Calu3 (cell line): ENCODE measurements at regions of chr18 and their contacts with region 1.

Region 1: DNA sequence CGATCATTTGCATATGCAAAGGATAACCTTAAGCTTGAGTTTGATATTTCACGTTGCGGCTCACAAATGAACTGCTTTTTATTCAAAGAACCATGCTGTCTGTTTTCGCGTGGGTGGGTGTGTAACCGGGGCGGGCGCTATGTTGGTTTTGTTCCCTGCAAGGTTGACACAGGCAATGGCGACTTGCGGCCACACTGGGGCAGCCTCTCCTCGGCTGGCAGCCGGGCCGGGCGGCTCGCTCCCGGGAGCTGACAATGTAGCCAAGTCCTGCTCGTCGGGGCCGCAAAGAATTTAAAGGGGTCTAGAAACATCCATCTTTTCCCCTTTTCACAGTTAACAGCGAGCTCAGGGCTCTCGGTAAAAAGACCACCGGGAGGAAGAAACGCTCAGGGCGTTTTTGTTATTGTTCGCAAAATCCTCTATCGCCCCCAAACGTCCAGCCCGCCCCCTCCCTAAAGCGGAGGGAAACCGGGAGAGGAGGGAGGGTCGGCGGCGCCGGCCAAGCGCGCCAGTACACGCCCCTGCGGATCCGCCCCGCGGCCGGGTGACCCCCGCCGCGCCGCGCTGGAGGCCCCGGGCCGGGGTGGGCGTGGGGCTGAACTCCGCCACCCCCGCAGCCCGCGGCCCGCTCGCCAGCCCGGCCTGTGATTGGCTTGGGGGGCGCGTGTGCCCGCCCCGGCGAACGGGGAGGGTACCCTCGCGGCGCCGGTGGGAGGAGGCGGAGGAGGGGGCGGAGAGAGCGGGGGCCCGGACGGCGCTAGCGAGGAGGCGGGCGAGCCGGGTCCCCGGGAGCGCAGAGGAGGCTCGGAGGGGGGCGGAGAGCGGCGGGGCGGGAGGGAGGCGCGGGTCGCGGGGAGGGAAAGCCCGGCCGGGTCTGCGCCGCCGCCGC is at the start of gene NEDD4L:
- DNase-seq: peak; percentile 93
- H3K4me3 Mint-ChIP-seq: peak within 1 kb of the TSS; percentile 99
- H3K27ac Mint-ChIP-seq: peak within 1 kb of the TSS; percentile 93
- H3K4me1 Mint-ChIP-seq: peaks cover 50% of the 10 kb centered on the region
- H3K27me3 Mint-ChIP-seq: no peaks in the 10 kb centered on the region
- CTCF ChIP-seq: peak; percentile 79
- total RNA-seq, gene NEDD4L: 213 TPM in 2 replicates

Region 2: GRCh38 chr18:57881818-57882413 is 161.8 kb before region 1 on chr18:
- CTCF ChIA-PET with region 1: interaction called, 13 read pairs
- intact Hi-C with region 1: loop called (anchors 1 kb)
- DNase-seq: peak; percentile 78
- H3K4me3 Mint-ChIP-seq: no peak overlapping the region
- H3K27ac Mint-ChIP-seq: peak overlapping the region; percentile 37
- H3K4me1 Mint-ChIP-seq: peaks cover 31% of the 10 kb centered on the region
- H3K27me3 Mint-ChIP-seq: no peaks in the 10 kb centered on the region
- CTCF ChIP-seq: peak; percentile 85

Region 3: GRCh38 chr18:57895182-57895581 is 148.6 kb before region 1 on chr18:
- CTCF ChIA-PET with region 1: no interaction called
- intact Hi-C with region 1: no loop called
- DNase-seq: no peak
- H3K4me3 Mint-ChIP-seq: no peak overlapping the region
- H3K27ac Mint-ChIP-seq: no peak overlapping the region
- H3K4me1 Mint-ChIP-seq: peaks cover 46% of the 10 kb centered on the region
- H3K27me3 Mint-ChIP-seq: no peaks in the 10 kb centered on the region
- CTCF ChIP-seq: no peak

Region 4: DNA sequence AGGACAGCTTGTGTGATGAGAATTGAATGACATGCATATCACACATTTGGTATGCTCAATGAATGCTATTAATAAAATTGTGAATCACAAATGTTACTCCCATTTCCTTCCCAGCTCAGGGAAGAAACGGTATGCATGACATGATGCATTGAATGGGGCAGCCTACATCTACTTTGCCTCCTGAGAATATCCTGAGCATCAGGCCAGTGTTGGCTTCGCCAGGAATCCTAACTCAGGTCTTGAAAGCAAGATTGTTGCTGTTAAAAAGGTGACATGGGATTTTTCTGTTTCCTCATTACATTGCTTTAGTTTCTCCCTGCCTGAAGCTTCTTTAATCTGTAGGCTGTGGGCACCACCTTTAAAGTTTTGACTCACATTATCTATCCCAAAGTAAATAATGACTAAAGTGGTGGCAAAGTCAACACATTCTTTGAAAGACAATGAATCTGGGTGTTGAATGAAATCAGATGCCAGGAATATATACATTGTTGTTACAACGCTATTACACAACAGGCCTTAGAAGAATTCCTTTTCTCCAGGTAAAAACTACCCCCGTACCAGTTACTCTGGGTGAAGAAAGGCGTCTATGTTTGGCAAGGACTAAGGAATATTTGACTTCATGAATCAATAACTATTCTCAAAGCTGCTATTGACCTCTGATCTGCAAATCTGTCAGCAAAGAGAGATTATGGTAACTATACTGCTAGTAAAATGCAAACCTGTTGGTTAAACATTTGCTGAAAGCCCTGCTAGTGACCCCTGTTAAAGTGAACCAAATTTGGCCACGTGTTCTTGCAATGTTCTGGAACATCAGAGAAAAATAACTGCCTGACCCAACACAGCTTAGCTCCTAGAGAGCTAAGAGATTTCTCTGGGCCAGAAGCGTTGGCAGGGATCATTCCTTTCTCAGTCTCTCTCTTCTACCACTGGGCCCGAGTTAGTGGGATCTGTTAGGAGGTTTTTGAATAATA is 30.2 kb before region 1 on chr18:
- CTCF ChIA-PET with region 1: interaction called, 9 read pairs
- intact Hi-C with region 1: loop called (anchors 1 kb)
- DNase-seq: peak; percentile 49
- H3K4me3 Mint-ChIP-seq: no peak overlapping the region
- H3K27ac Mint-ChIP-seq: peak overlapping the region; percentile 92
- H3K4me1 Mint-ChIP-seq: peaks cover 64% of the 10 kb centered on the region
- H3K27me3 Mint-ChIP-seq: no peaks in the 10 kb centered on the region
- CTCF ChIP-seq: no peak

Region 5: DNA sequence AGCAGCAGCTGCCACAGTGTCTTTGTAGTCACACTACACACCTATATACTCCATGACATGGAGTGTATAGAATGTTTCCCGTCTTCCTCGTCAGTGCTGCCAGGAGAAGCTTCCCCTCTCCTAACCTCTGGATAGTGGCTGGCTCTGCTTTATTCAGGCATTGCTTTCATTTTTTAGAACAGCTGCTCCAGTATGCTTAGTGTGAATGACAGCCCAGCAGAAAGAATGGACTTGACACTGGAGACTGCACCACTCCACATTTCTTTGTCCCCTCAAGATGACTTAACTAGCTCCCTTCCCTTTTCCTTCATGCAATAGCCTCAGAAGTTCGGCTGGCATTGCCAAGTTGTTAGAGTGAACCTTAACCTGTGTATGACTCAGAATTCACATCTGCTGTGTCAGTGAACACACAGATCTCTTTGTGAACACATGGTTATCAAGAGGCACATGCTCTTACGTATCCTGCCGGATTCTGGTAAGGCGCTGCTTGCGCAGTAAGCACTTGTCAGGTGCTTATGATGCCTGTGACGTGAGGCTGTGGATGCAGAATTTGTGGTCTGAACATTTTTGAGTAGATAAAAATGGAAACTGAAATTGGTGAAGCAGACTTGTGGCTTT is 74.2 kb after region 1 on chr18:
- CTCF ChIA-PET with region 1: interaction called, 22 read pairs
- intact Hi-C with region 1: loop called (anchors 2 kb)
- DNase-seq: peak; percentile 67
- H3K4me3 Mint-ChIP-seq: peak overlapping the region; percentile 43
- H3K27ac Mint-ChIP-seq: peak overlapping the region; percentile 96
- H3K4me1 Mint-ChIP-seq: peaks cover 66% of the 10 kb centered on the region
- H3K27me3 Mint-ChIP-seq: no peaks in the 10 kb centered on the region
- CTCF ChIP-seq: no peak

Region 6: GRCh38 chr18:58176915-58177717 is 133.4 kb after region 1 on chr18:
- CTCF ChIA-PET with region 1: interaction called, 4 read pairs
- intact Hi-C with region 1: loop called (anchors 5 kb)
- DNase-seq: peak; percentile 63
- H3K4me3 Mint-ChIP-seq: peak overlapping the region; percentile 8
- H3K27ac Mint-ChIP-seq: peak overlapping the region; percentile 51
- H3K4me1 Mint-ChIP-seq: peaks cover 69% of the 10 kb centered on the region
- H3K27me3 Mint-ChIP-seq: no peaks in the 10 kb centered on the region
- CTCF ChIP-seq: no peak